ENCODE measurements at regions of chr3 and their contacts with region 1.

Region 1: DNA sequence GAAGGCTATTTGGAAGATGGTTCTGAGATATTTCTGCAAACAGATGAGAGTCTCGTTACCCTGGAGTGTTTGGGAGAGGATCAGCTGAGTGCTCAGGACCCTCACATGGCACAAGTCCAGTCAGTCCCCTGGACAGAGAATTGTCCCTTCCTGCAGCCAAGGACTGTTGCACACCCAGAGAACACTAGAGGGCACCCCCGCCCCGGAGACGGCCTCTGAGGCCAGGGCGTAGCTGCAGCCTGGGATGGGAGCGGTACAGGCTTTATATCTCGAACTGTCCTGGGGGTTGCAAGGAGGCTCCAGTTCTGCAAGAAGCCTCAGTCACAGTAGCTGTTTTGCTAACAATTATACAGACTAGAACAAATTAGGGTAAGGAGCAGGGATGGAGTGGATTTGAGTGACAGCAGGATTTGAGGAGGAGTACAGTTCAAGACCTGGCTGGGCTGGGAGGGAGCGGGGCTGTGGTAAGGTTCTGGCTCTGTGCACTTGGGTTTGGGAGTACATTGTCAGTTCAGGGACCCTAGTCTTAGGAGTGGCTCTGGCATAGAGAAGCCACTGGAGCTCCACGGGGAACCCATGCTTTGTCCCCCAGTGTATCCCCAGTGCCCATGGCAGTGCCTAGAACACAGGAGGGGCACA is 67.6 kb upstream of the HACD2 start:
- DNase-seq: no peak
- H3K4me3 ChIP-seq: no peak overlapping the region
- H3K27ac ChIP-seq: peak overlapping the region; percentile 94
- H3K27me3 ChIP-seq: no peaks in the 10 kb centered on the region
- CTCF ChIP-seq: peak; percentile 88

Region 2: DNA sequence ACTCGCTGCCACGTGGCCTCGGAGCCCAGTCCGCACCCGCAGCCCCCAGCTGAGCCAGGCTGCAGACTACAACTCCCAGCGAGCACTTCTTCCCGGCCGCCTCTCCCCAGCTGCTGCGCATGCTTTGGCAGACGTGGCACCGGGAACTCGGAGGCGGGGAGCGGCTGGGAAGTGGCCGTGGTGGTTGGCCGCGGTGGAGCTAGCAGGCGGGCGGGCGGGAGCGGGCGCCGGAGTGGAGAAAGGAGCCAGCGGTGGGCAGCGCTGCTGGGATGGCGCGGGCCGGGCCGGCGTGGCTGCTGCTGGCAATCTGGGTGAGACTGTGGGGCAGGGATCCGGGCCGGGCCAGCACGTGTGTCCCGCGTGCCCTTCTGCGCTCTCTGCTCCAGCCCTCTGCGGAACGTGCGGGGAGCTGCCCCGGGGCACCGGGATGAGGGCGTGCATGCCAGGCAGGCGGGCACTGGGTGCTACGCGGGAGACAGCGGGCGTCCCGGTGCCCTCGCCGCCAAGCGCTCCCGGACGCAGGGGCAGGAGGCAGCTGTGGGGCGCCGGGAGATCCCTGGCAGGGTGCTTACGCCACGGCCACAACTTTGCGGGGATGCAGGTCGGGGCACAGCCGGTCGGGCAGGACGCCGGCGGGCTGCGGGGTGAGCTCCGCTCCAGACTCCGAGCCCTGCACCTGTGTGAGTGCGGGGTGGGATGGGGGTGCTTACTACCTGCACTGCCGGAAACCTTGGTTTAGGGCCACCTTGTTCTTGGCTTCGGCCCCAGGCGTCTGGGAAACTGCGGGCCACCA is 585.4 kb before region 1 on chr3 and contains the start of gene PDIA5:
- CTCF ChIA-PET with region 1: no interaction called
- POLR2A ChIA-PET with region 1: no interaction called
- DNase-seq: peak; percentile 66
- H3K4me3 ChIP-seq: peak within 1 kb of the TSS; percentile 95
- H3K27ac ChIP-seq: peak within 1 kb of the TSS; percentile 52
- H3K27me3 ChIP-seq: peaks cover 3% of the 10 kb centered on the region
- CTCF ChIP-seq: no peak
- polyA plus RNA-seq, gene PDIA5: 33.1 and 35.5 TPM in 2 replicates

Region 3: GRCh38 chr3:123618768-123619484 is 33.5 kb before region 1 on chr3:
- CTCF ChIA-PET with region 1: interaction called, 6 read pairs
- POLR2A ChIA-PET with region 1: interaction called, 10 read pairs
- DNase-seq: peak; percentile 39
- H3K4me3 ChIP-seq: peak overlapping the region; percentile 82
- H3K27ac ChIP-seq: peak overlapping the region; percentile 39
- H3K27me3 ChIP-seq: no peaks in the 10 kb centered on the region
- CTCF ChIP-seq: no peak

Region 4: GRCh38 chr3:123682781-123683504 is 30.5 kb after region 1 on chr3:
- CTCF ChIA-PET with region 1: interaction called, 26 read pairs
- POLR2A ChIA-PET with region 1: no interaction called
- DNase-seq: no peak
- H3K4me3 ChIP-seq: no peak overlapping the region
- H3K27ac ChIP-seq: no peak overlapping the region
- H3K27me3 ChIP-seq: no peaks in the 10 kb centered on the region
- CTCF ChIP-seq: no peak

Region 5: DNA sequence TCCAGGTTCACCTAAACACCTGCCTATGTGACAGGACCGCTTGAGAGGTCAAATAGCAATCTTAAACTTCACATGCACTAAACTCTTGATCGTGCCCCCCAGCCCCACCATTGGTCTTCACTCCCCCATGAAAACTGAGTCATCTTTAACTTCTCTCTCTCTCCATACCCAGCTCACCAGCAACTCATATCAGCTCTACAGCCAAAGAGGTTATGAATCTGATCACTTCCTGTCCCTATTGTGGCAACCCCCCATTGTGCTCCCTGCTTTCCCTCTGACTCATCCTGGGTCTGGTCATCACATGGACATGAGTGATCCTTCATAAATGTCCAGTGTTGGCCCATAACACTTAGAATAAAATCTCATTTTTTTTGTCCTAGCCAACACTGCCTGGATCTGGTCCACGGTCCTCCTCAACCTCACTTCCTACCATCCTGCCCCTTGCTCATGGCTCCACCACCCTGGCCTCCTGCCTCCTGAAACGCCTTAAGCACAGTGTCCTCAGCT is 35.8 kb after region 1 on chr3:
- CTCF ChIA-PET with region 1: interaction called, 56 read pairs
- POLR2A ChIA-PET with region 1: no interaction called
- DNase-seq: peak; percentile 69
- H3K4me3 ChIP-seq: no peak overlapping the region
- H3K27ac ChIP-seq: peak overlapping the region; percentile 82
- H3K27me3 ChIP-seq: no peaks in the 10 kb centered on the region
- CTCF ChIP-seq: no peak

Region 6: DNA sequence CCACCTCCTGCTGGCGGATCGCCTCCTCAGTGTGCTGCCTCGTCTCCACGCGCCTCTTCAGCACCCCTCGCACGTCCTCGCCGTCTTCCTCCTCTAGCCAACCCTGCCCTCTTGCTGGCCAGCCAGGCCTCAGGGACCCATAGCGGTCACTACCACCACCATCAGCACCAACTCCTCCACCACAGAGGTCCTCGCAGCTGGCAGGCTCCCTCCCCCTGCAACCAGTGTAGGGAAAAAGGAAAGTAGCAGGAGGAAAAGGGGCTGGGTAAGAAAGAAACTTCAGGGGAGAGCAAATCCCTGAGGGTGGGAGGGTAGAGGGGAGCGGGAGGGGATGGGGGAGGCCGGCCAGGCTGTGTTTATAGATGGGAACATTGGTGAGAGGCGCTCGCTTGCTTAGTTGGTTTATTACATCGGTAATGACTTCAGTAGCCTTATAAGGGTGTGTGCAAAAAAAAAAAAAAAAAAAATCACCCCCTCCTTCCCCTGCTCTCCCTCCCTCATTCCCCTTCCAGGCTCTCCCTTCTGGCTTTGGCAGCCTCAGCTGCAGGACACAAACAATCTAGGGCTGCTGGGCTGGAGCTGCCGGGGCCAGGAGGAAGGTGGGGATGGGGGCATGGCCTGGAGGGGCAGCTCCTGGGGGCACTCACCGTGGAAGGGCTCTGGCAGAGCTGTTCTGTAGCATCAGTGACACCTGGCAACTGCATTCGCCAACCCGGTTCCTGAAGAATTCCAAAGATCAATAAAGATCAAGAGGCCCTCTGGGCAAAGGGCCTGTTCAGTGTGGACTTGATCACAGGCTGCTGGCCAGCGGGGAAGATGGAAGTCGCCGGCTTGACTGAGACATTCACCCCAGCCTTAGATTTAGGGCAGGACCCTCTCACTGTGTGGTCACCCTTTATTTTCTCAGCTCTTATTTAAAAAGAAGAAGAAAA is 48.6 kb after region 1 on chr3:
- CTCF ChIA-PET with region 1: interaction called, 56 read pairs
- POLR2A ChIA-PET with region 1: interaction called, 5 read pairs
- DNase-seq: no peak
- H3K4me3 ChIP-seq: peak overlapping the region; percentile 49
- H3K27ac ChIP-seq: no peak overlapping the region
- H3K27me3 ChIP-seq: no peaks in the 10 kb centered on the region
- CTCF ChIP-seq: no peak

Region 7: GRCh38 chr3:123706871-123707270 is 54.4 kb after region 1 on chr3:
- CTCF ChIA-PET with region 1: interaction called, 22 read pairs
- POLR2A ChIA-PET with region 1: interaction called, 5 read pairs
- DNase-seq: no peak
- H3K4me3 ChIP-seq: no peak overlapping the region
- H3K27ac ChIP-seq: no peak overlapping the region
- H3K27me3 ChIP-seq: no peaks in the 10 kb centered on the region
- CTCF ChIP-seq: no peak

Region 8: GRCh38 chr3:123716411-123716810 is 63.9 kb after region 1 on chr3:
- CTCF ChIA-PET with region 1: interaction called, 60 read pairs
- POLR2A ChIA-PET with region 1: no interaction called
- DNase-seq: no peak
- H3K4me3 ChIP-seq: no peak overlapping the region
- H3K27ac ChIP-seq: no peak overlapping the region
- H3K27me3 ChIP-seq: no peaks in the 10 kb centered on the region
- CTCF ChIP-seq: no peak

Region 9: DNA sequence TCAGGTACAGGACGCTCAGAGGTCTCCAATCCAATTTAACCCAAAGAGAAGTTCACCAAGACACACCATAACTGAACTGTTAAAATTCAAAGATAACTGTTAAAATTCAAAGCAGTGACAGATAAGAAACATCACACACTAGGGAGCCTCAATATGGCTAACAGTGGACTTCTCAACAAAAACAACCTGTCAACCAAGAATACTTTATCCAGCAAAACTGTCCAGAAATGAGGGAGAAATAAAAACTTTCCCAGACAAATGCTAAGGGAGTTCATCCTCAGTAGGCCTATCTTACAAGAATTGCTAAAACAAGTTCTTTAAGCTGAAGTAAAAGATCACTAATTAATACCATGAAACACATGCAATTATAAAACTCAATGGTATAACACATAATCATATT is 267.9 kb after region 1 on chr3:
- CTCF ChIA-PET with region 1: no interaction called
- POLR2A ChIA-PET with region 1: no interaction called
- DNase-seq: no peak
- H3K4me3 ChIP-seq: no peak overlapping the region
- H3K27ac ChIP-seq: no peak overlapping the region
- H3K27me3 ChIP-seq: no peaks in the 10 kb centered on the region
- CTCF ChIP-seq: no peak

Region 10: DNA sequence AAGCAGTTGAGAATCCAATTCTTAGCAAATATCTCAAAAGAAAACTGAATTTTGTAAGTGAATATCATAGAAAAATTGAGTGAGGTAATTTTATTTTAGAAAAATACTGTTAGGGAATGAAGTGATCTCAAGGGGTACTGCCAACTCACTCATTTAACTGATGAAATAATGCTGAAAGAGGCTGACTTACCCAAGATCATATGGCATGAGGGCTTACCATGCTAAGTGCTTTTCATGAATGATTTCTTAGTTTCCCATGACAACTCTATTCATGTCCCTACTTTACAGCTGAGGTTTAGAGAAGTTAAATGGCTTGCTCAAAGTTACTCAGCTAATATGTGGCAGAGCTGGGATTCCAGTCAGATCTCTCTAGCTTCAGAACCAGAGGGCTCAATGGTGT is 278.0 kb after region 1 on chr3:
- CTCF ChIA-PET with region 1: no interaction called
- POLR2A ChIA-PET with region 1: no interaction called
- DNase-seq: no peak
- H3K4me3 ChIP-seq: no peak overlapping the region
- H3K27ac ChIP-seq: no peak overlapping the region
- H3K27me3 ChIP-seq: no peaks in the 10 kb centered on the region
- CTCF ChIP-seq: no peak

Region 11: GRCh38 chr3:124092811-124093210 is 440.3 kb after region 1 on chr3:
- CTCF ChIA-PET with region 1: no interaction called
- POLR2A ChIA-PET with region 1: no interaction called
- DNase-seq: no peak
- H3K4me3 ChIP-seq: no peak overlapping the region
- H3K27ac ChIP-seq: no peak overlapping the region
- H3K27me3 ChIP-seq: no peaks in the 10 kb centered on the region
- CTCF ChIP-seq: no peak